PC-9 (cell line): ENCODE measurements at regions of chr2 and their contacts with region 1.

Region 1: DNA sequence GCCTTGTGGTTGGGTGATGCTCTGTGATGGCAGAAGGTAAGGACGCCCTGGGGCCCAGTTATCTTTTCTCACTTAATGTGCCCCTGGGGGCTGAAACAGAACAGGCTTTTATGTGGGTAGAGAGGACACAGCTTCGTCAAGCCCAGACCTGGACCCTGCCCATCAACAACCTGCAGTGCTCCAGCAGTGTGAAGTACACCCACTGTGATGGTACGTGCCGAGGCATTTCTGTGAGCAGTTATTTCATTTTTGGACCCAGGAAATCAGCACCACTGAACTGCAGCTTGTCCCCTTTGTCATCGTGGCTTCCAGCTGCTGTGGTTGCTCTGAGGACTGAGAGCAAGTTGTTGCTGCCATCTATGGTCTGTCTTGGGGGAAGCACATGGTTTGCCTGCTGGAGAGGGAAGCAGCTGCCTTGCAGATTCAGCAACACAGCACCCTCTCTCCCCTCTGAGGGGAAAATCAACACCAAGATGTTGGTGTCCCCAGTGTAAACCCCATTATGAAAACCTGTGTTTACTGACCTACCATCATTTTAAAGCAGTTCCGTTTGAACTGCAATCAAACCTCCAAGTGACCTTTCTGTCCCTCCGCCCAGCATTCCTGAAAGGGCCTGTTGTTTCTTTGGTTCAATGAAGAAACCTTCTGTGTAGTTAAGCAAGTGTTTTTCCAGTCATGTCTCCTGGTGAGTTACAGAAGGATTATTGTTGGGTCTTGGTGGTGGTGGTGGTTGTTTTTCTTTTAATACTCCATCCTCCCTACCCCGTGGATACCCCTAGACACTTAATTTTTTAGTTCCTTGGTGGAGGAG is 158.2 kb downstream of the MGAT5 start:
- DNase-seq: peak; percentile 36 to 57
- H3K4me3 ChIP-seq: no peak overlapping the region
- H3K27ac ChIP-seq: no peak overlapping the region
- H3K4me1 ChIP-seq: peaks cover 2% of the 10 kb centered on the region
- H3K27me3 ChIP-seq: no peaks in the 10 kb centered on the region
- CTCF ChIP-seq: peak; percentile 70

Region 2: DNA sequence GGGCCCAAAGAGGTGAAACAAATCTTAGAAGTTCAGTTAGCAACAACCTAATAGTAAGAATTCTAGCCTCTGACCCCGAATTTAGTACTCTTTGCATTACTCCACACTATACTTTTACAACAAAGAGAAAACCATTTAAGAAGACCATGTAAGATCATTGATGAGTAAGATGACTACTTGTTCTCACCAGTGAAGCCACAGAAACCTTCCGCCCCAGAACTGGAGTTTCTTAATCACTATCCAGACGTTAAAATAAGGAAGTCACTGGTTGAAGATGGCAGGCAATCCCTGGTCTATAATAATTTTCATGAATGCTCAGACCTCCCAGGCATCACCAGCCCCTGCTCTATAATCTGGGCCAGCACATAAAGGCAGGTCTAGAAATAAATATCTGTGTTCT is 211.8 kb after region 1 on chr2:
- CTCF ChIA-PET with region 1: no interaction called
- POLR2A ChIA-PET with region 1: no interaction called
- intact Hi-C with region 1: no loop called
- DNase-seq: no peak
- H3K4me3 ChIP-seq: no peak overlapping the region
- H3K27ac ChIP-seq: no peak overlapping the region
- H3K4me1 ChIP-seq: no peaks in the 10 kb centered on the region
- H3K27me3 ChIP-seq: no peaks in the 10 kb centered on the region
- CTCF ChIP-seq: no peak

Region 3: DNA sequence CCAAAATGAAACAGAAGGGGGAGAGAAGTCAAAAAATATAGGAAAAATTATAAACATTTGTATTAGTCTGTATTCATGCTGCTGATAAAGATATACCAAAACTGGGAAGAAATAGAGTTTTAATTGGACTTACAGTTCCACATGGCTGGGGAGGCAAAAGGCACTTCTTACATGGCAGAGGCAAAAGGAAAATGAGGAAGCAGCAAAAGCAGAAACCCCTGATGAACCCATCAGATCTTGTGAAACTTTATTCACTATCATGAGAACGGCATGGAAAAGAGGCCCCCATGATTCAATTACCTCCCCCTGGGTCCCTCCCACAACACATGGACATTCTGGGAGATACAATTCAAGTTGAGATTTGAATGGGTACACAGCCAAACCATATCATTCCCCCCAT is 1039.9 kb after region 1 on chr2:
- CTCF ChIA-PET with region 1: interaction called, 12 read pairs
- POLR2A ChIA-PET with region 1: no interaction called
- intact Hi-C with region 1: no loop called
- DNase-seq: no peak
- H3K4me3 ChIP-seq: no peak overlapping the region
- H3K27ac ChIP-seq: no peak overlapping the region
- H3K4me1 ChIP-seq: no peaks in the 10 kb centered on the region
- H3K27me3 ChIP-seq: no peaks in the 10 kb centered on the region
- CTCF ChIP-seq: no peak